Activated CD8-positive, alpha-beta memory T cell treated with anti-CD3 and anti-CD28 coated beads, Interleukin-2, amount 10 ng/mL, durations not matched to agents 7 days and 5 days (primary cell): ENCODE measurements at regions of chr14 and their contacts with region 1.

Region 1: GRCh38 chr14:24690492-24690891 is 56.5 kb upstream of the GZMB start:
- DNase-seq: peak; percentile 57
- ATAC-seq: peak; percentile 16
- H3K4me3 Mint-ChIP-seq: no peak overlapping the region
- H3K27ac Mint-ChIP-seq: no peak overlapping the region
- H3K4me1 Mint-ChIP-seq: peaks cover 37% of the 10 kb centered on the region
- H3K27me3 Mint-ChIP-seq: no peaks in the 10 kb centered on the region

Region 2: DNA sequence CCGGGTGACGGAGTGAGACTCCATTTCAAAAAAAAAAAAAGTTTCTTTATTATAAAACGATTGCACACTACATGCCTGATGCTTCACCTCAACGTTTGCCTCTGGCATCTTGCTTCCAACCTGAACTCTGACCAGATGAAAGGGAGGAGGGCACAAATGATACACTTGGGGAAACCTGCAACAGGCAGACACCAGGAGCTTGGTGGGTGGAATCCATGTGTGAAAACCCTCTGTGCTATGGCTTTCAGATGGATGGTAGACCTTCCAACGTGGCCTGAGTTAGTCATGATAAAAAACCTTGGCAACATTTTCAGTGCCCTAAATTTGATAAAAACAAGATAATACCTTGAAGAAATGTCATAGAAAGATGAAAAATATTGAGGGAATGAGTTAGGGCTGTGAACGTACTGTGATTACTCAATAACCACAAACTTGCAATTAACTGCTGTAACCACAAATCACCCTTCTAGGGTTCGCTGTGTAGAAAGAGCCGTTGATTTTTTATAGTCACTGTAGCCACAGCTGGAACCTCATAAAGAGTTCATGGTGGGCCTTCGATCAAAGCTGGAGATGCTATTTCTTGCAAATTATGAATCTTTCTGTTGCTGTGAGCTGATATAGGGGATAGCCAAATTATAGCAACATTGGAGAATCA is 30.4 kb before region 1 on chr14:
- CTCF ChIA-PET with region 1: interaction called, 10 read pairs
- DNase-seq: no peak
- ATAC-seq: peak; percentile 65
- H3K4me3 Mint-ChIP-seq: peak overlapping the region; percentile 17
- H3K27ac Mint-ChIP-seq: peak overlapping the region; percentile 84
- H3K4me1 Mint-ChIP-seq: peaks cover 66% of the 10 kb centered on the region
- H3K27me3 Mint-ChIP-seq: no peaks in the 10 kb centered on the region

Region 3: GRCh38 chr14:24673534-24674203 is 16.8 kb before region 1 on chr14:
- CTCF ChIA-PET with region 1: interaction called, 31 read pairs
- DNase-seq: peak; percentile 90
- ATAC-seq: peak; percentile 77
- H3K4me3 Mint-ChIP-seq: peak overlapping the region; percentile 74
- H3K27ac Mint-ChIP-seq: peak overlapping the region; percentile 100
- H3K4me1 Mint-ChIP-seq: peaks cover 89% of the 10 kb centered on the region
- H3K27me3 Mint-ChIP-seq: no peaks in the 10 kb centered on the region

Region 4: DNA sequence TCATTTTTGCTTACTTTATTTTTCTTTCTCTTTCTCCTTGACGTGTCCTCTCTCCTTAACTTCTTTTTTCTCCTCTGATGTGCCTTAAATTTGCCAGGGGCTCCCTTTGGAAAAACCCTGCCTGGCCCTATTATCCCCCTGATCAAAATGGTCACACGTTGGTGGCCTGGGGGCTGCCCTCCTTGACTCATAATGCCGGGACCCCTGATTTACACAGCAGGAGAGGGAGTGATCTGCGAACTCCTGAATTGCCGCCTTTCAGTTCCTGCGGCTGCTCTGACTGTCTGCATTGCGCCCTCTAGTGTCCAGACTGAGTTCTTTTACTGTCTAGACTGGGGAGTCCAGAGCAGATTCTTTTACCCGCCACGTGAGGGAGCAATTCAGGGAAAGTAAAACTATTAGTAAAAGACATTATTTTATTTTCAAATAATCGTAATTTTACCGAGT is 11.7 kb before region 1 on chr14:
- CTCF ChIA-PET with region 1: interaction called, 31 read pairs
- DNase-seq: peak; percentile 91
- ATAC-seq: peak; percentile 73
- H3K4me3 Mint-ChIP-seq: peak overlapping the region; percentile 72
- H3K27ac Mint-ChIP-seq: peak overlapping the region; percentile 90
- H3K4me1 Mint-ChIP-seq: peaks cover 70% of the 10 kb centered on the region
- H3K27me3 Mint-ChIP-seq: no peaks in the 10 kb centered on the region

Region 5: DNA sequence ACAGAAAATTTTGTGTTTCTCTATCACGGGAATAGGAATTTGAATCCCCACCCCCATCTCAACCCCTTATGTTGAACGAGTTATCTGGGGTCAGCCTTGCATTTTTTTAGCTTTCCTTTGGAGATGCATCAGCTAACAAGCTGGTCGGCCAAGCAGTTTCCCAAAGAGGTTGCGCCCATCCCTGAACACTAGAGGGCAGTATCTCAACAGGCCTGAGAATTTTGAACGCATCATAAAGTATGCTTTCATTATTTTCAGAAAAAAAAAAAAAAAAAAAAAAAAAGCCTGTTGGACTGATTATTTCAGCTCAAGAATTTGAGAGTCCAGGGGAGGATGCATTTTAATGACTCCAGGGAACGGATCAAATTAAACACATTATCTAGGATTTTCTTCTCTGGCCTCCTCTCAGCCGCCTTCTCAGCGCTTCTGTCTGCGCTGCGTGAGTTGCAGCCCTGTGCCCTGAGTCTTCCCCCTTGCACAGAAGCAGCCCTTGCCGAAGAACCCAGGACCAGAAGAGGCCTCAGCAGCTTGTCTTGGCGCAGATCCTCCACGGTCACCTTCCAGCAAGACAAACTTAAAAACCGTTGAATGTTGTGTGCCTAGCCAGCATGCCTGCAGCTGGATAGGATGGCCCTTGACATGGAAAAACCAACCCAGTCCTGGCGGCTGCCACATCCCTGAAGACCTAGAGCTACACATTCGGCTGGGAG is 20.1 kb after region 1 on chr14:
- CTCF ChIA-PET with region 1: interaction called, 33 read pairs
- DNase-seq: peak; percentile 77
- ATAC-seq: peak; percentile 77
- H3K4me3 Mint-ChIP-seq: no peak overlapping the region
- H3K27ac Mint-ChIP-seq: no peak overlapping the region
- H3K4me1 Mint-ChIP-seq: peaks cover 4% of the 10 kb centered on the region
- H3K27me3 Mint-ChIP-seq: no peaks in the 10 kb centered on the region